ENCODE measurements at regions of chr3 and their contacts with region 1.

Region 1: GRCh38 chr3:52444860-52445793 is at the start of gene SEMA3G:
- DNase-seq: peak; percentile 70
- H3K4me3 Mint-ChIP-seq: no peak within 1 kb of the TSS
- H3K27ac Mint-ChIP-seq: no peak within 1 kb of the TSS
- H3K4me1 Mint-ChIP-seq: peaks cover 7% of the 10 kb centered on the region
- H3K27me3 Mint-ChIP-seq: no peaks in the 10 kb centered on the region
- total RNA-seq, gene SEMA3G: 0.13 TPM in 1 of 2 replicates, not detected in the other

Region 2: GRCh38 chr3:52171514-52172261 is 273.4 kb before region 1 on chr3:
- intact Hi-C with region 1: no loop called
- DNase-seq: no peak
- H3K4me3 Mint-ChIP-seq: no peak overlapping the region
- H3K27ac Mint-ChIP-seq: no peak overlapping the region
- H3K4me1 Mint-ChIP-seq: peaks cover 7% of the 10 kb centered on the region
- H3K27me3 Mint-ChIP-seq: peaks cover 6% of the 10 kb centered on the region

Region 3: GRCh38 chr3:52407779-52408178 is 37.3 kb before region 1 on chr3:
- intact Hi-C with region 1: loop called (anchors 1 kb)
- DNase-seq: no peak
- H3K4me3 Mint-ChIP-seq: peak overlapping the region; percentile 97
- H3K27ac Mint-ChIP-seq: no peak overlapping the region
- H3K4me1 Mint-ChIP-seq: peaks cover 33% of the 10 kb centered on the region
- H3K27me3 Mint-ChIP-seq: no peaks in the 10 kb centered on the region

Region 4: GRCh38 chr3:52428151-52429005 is 16.7 kb before region 1 on chr3:
- intact Hi-C with region 1: loop called (anchors 1 kb)
- DNase-seq: no peak
- H3K4me3 Mint-ChIP-seq: no peak overlapping the region
- H3K27ac Mint-ChIP-seq: no peak overlapping the region
- H3K4me1 Mint-ChIP-seq: no peaks in the 10 kb centered on the region
- H3K27me3 Mint-ChIP-seq: peaks cover 12% of the 10 kb centered on the region

Region 5: DNA sequence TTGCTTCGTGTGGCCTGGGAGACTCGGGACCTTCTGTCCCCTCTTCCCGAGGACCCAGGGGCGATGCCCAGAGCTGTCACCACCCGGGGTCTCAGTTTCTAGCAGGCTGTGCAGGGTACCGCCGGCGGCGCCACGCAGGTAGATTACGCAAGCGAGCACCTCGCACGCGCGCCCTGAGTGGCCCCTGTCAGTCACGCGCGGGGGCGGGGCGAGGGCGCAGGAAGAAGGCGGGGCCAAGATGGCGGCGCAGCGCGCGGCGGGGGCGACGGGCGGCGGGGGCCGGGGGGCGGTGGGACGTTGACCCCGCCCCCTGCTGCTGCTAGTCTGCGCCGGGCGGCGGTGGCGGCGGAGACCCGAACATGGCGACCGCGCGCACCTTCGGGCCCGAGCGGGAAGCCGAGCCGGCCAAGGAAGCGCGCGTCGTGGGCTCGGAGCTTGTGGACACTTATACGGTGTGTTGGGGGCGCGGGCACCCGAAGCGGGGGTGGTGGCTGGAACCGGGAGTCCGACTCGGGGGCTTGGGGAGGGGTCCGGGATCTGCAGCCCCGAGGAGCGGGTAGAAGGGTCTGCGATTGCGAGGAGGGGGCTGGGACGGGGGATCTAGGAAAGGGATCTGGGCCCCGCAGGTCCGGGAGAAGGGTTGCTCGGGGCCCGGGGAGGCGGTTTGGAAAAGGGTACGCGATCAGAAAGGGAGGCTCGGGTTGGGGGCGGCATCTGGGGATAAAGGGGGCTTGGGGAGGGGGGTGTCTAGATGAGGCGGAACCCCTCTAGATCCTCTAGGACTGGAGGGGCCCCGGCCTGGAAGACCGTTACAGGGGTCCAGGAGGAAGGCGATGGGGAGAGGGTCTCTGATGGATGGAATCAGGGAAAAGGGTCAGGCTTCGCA is 10.4 kb after region 1 on chr3 and contains the start of gene NISCH:
- intact Hi-C with region 1: loop called (anchors 1 kb)
- DNase-seq: peak; percentile 96
- H3K4me3 Mint-ChIP-seq: peak within 1 kb of the TSS; percentile 96
- H3K27ac Mint-ChIP-seq: peak within 1 kb of the TSS; percentile 93
- H3K4me1 Mint-ChIP-seq: peaks cover 39% of the 10 kb centered on the region
- H3K27me3 Mint-ChIP-seq: no peaks in the 10 kb centered on the region
- total RNA-seq, gene NISCH: 72.0 and 74.2 TPM in 2 replicates